Activated CD4-positive, alpha-beta memory T cell treated with anti-CD3 and anti-CD28 coated beads for 36 hours (primary cell): ENCODE measurements at regions of chr6 and their contacts with region 1.

Region 1: GRCh38 chr6:111533087-111533784 is 50.2 kb upstream of the REV3L start:
- DNase-seq: peak; percentile 71
- H3K4me3 Mint-ChIP-seq: no peak overlapping the region
- H3K27ac Mint-ChIP-seq: peak overlapping the region; percentile 6
- H3K4me1 Mint-ChIP-seq: peaks cover 26% of the 10 kb centered on the region
- H3K27me3 Mint-ChIP-seq: no peaks in the 10 kb centered on the region

Region 2: GRCh38 chr6:111406200-111406721 is 127.0 kb before region 1 on chr6:
- CTCF ChIA-PET with region 1: no interaction called
- POLR2A ChIA-PET with region 1: no interaction called
- intact Hi-C with region 1: loop called (anchors 1 kb)
- DNase-seq: no peak
- H3K4me3 Mint-ChIP-seq: no peak overlapping the region
- H3K27ac Mint-ChIP-seq: peak overlapping the region; percentile 25
- H3K4me1 Mint-ChIP-seq: peaks cover 13% of the 10 kb centered on the region
- H3K27me3 Mint-ChIP-seq: no peaks in the 10 kb centered on the region

Region 3: GRCh38 chr6:111522393-111523020 is 10.7 kb before region 1 on chr6:
- CTCF ChIA-PET with region 1: no interaction called
- POLR2A ChIA-PET with region 1: no interaction called
- intact Hi-C with region 1: no loop called
- DNase-seq: no peak
- H3K4me3 Mint-ChIP-seq: no peak overlapping the region
- H3K27ac Mint-ChIP-seq: no peak overlapping the region
- H3K4me1 Mint-ChIP-seq: peaks cover 9% of the 10 kb centered on the region
- H3K27me3 Mint-ChIP-seq: no peaks in the 10 kb centered on the region

Region 4: GRCh38 chr6:111565326-111566221 is 32.3 kb after region 1 on chr6:
- CTCF ChIA-PET with region 1: no interaction called
- POLR2A ChIA-PET with region 1: no interaction called
- intact Hi-C with region 1: loop called (anchors 1 kb)
- DNase-seq: peak; percentile 43
- H3K4me3 Mint-ChIP-seq: no peak overlapping the region
- H3K27ac Mint-ChIP-seq: peak overlapping the region; percentile 48
- H3K4me1 Mint-ChIP-seq: peaks cover 53% of the 10 kb centered on the region
- H3K27me3 Mint-ChIP-seq: no peaks in the 10 kb centered on the region

Region 5: DNA sequence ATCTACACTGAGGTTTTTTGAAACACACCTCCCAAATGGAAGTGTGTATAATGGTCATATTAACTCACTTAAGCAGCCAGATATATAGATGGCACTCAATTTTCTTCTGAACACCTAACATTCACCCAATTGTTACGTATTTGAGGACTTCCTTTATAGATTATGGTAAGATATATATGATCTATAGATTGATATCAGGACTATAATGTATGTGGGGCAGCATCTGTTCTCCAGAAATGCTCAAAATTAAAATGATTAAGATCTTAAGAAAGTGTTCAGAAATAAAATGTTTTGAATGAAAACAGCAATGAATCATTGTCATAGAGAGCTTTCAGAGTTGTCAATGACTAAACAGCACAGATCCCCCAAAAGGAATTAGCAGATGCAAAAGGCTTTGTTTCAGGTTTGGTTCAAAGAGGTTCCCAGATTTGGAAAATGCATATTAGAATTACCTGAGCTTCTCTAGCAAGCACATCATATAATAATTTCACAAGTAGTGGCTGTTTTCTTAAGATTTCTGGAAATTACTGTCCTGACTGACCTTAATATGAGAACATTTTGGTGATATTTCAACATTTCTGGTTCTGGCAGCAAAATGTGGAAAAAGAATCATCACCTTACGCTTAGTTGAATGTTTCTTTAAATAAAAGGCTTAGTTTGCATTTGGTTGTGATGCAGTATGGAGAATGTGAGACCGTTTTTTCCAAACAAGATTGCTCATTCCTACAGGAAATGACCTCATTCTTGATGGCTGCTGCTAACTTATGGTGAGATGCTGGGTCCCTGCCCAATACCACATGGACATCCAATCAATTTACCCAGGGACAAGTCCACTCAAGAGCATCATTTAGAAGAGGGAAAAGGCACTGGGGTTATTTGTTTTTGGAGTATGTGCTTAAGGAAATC is 40.9 kb after region 1 on chr6:
- CTCF ChIA-PET with region 1: no interaction called
- POLR2A ChIA-PET with region 1: no interaction called
- intact Hi-C with region 1: loop called (anchors 1 kb)
- DNase-seq: peak; percentile 27
- H3K4me3 Mint-ChIP-seq: no peak overlapping the region
- H3K27ac Mint-ChIP-seq: peak overlapping the region; percentile 81
- H3K4me1 Mint-ChIP-seq: peaks cover 19% of the 10 kb centered on the region
- H3K27me3 Mint-ChIP-seq: no peaks in the 10 kb centered on the region

Region 6: DNA sequence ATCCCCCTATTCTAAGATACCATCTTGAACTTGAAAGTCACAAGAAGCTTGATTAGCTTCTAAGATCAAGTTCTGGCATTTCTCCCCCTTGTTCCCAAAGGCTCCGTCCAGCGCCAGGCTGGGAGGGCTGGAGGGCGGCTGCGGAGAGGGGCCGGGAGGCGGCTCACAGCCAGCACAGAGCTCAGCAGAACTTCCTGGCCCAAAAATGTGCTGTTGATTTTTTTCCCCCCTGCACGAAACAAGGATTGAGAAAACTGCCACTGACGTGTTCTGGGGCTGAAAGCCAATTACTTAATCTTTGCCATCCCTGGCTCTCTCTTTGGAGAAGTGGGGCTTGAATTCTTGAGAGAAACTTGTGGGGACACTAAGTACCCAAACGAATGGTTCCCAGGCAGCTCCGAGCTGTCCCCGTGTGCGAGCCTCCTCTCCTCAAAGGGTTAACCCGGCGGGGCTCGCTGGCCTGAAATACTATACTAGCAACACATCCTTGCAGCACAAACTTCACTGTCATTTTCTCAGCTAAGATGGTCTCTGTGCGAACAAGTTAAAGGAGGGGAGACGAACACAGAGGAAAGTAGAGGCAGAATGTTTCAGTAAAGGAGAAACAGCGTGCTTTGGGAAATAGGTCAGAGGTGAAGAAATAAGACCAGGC is 72.0 kb after region 1 on chr6:
- CTCF ChIA-PET with region 1: no interaction called
- POLR2A ChIA-PET with region 1: interaction called, 3 read pairs
- intact Hi-C with region 1: loop called (anchors 1 kb)
- DNase-seq: peak; percentile 43
- H3K4me3 Mint-ChIP-seq: peak overlapping the region; percentile 81
- H3K27ac Mint-ChIP-seq: peak overlapping the region; percentile 93
- H3K4me1 Mint-ChIP-seq: peaks cover 48% of the 10 kb centered on the region
- H3K27me3 Mint-ChIP-seq: no peaks in the 10 kb centered on the region